Activated CD4-positive, alpha-beta T cell treated with anti-CD3 and anti-CD28 coated beads for 36 hours (primary cell): ENCODE measurements at regions of chr4 and their contacts with region 1.

Region 1: DNA sequence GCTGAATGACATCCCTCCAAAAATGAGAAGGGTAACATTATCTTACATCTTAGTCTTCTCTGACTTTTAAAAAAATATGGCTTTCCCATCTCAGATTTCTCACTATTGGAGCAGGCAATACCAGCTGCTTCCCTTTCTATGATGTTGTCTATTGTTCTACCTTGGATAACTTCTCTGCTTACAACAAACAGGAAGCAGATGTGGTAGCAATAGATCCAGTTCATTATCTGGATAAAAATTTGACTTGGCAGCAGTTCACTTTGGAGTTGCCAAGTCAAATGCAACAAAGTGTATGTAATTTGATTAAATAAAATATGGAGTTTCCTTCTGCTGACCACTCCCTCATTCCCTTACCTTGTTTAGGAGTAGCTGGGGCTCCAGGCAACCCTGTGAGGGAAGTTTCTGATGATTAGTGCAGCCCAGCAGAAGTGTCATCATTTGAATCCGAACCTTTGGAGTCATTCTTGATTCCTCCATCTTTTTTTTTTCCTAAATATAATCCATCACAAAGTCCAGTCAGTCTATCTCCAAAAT is 72.0 kb upstream of the GPRIN3 start:
- DNase-seq: no peak
- ATAC-seq: no peak
- H3K4me3 Mint-ChIP-seq: no peak overlapping the region
- H3K27ac Mint-ChIP-seq: no peak overlapping the region
- H3K4me1 Mint-ChIP-seq: no peaks in the 10 kb centered on the region
- H3K27me3 Mint-ChIP-seq: no peaks in the 10 kb centered on the region

Region 2: GRCh38 chr4:87399148-87399547 is 1980.4 kb before region 1 on chr4:
- CTCF ChIA-PET with region 1: no interaction called
- POLR2A ChIA-PET with region 1: no interaction called
- intact Hi-C with region 1: no loop called
- DNase-seq: no peak
- ATAC-seq: no peak
- H3K4me3 Mint-ChIP-seq: no peak overlapping the region
- H3K27ac Mint-ChIP-seq: no peak overlapping the region
- H3K4me1 Mint-ChIP-seq: peaks cover 7% of the 10 kb centered on the region
- H3K27me3 Mint-ChIP-seq: no peaks in the 10 kb centered on the region

Region 3: GRCh38 chr4:89397464-89397863 is 17.9 kb after region 1 on chr4:
- CTCF ChIA-PET with region 1: interaction called, 11 read pairs
- POLR2A ChIA-PET with region 1: no interaction called
- intact Hi-C with region 1: no loop called
- DNase-seq: no peak
- ATAC-seq: no peak
- H3K4me3 Mint-ChIP-seq: no peak overlapping the region
- H3K27ac Mint-ChIP-seq: no peak overlapping the region
- H3K4me1 Mint-ChIP-seq: no peaks in the 10 kb centered on the region
- H3K27me3 Mint-ChIP-seq: no peaks in the 10 kb centered on the region